Heart left ventricle (tissue), 16 donors: ENCODE measurements at regions of chr2 and their contacts with region 1.

Region 1: GRCh38 chr2:152012697-152013096 is 86.1 kb downstream of the CACNB4 start:
- DNase-seq: no peak
- ATAC-seq: no peak
- H3K4me3 ChIP-seq: no peak overlapping the region
- H3K27ac ChIP-seq: no peak overlapping the region
- H3K4me1 ChIP-seq: no peaks in the 10 kb centered on the region
- H3K27me3 ChIP-seq: no peaks in the 10 kb centered on the region
- CTCF ChIP-seq: no peak
- POLR2A ChIP-seq: no peak

Region 2: GRCh38 chr2:151481744-151482143 is 531.0 kb before region 1 on chr2:
- intact Hi-C with region 1: loop called in 1 of 10 experiments (anchors 10 kb)
- DNase-seq: no peak
- ATAC-seq: no peak
- H3K4me3 ChIP-seq: no peak overlapping the region
- H3K27ac ChIP-seq: no peak overlapping the region
- H3K4me1 ChIP-seq: no peaks in the 10 kb centered on the region
- H3K27me3 ChIP-seq: no peaks in the 10 kb centered on the region
- CTCF ChIP-seq: no peak
- POLR2A ChIP-seq: no peak

Region 3: GRCh38 chr2:151936626-151937025 is 76.1 kb before region 1 on chr2:
- intact Hi-C with region 1: no loop called
- DNase-seq: no peak
- ATAC-seq: no peak
- H3K4me3 ChIP-seq: no peak overlapping the region
- H3K27ac ChIP-seq: no peak overlapping the region
- H3K4me1 ChIP-seq: peaks cover 0 to 1% (median 0%) of the 10 kb centered on the region in 12 donors
- H3K27me3 ChIP-seq: no peaks in the 10 kb centered on the region
- CTCF ChIP-seq: no peak
- POLR2A ChIP-seq: no peak

Region 4: GRCh38 chr2:151946899-151947822 is 65.5 kb before region 1 on chr2:
- intact Hi-C with region 1: no loop called
- DNase-seq: peak in 4 of 5 donors; percentile 29 to 58 (median 38)
- ATAC-seq: peak; percentile 15 to 77 (median 74)
- H3K4me3 ChIP-seq: peak overlapping the region in 9 of 12 donors; percentile 12 to 51 (median 39)
- H3K27ac ChIP-seq: peak overlapping the region in 4 of 12 donors; percentile 4 to 40 (median 22)
- H3K4me1 ChIP-seq: peaks cover 0 to 18% (median 7%) of the 10 kb centered on the region in 12 donors
- H3K27me3 ChIP-seq: no peaks in the 10 kb centered on the region
- CTCF ChIP-seq: peak; percentile 44 to 79 (median 61)
- POLR2A ChIP-seq: no peak

Region 5: DNA sequence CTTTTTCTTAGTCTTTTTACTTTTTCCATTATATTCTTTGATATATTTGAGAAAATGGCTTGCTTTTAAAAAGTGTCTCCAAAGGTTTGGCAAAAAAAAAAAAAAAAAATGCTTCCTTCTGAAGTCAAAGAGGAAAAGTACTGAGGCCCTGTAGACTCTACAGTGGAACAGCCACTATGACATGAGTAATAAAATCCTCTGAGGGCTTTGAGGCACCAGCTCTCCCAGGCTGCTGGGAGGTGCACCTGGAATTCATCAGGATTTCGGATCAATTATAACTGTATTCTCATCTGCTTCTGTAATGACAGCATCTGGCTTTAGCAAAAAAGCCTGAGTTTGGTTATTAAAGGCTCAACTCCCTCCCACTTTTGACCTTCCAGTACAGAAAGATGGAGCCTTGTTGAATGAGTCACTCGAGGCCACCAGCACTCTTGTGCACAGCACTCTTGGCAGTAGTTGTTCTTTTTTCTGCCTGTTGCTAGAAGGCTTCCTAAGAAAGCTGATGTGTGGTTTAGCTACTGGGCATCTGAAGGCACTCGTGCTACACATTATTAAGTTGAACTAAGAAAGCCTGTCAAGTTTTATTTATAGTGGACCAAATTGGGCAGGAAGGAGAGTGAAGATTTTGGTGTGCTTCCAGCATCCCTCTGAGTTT is 573.3 kb after region 1 on chr2:
- intact Hi-C with region 1: no loop called
- DNase-seq: peak in 1 of 5 donors; percentile 42
- ATAC-seq: peak in 3 of 4 donors; percentile 57 to 94 (median 85)
- H3K4me3 ChIP-seq: no peak overlapping the region
- H3K27ac ChIP-seq: no peak overlapping the region
- H3K4me1 ChIP-seq: peaks cover 0 to 14% (median 6%) of the 10 kb centered on the region in 12 donors
- H3K27me3 ChIP-seq: no peaks in the 10 kb centered on the region
- CTCF ChIP-seq: no peak
- POLR2A ChIP-seq: no peak